GM12878 (cell line): ENCODE measurements at regions of chrX and their contacts with region 1.

Region 1: GRCh38 chrX:52574416-52575275 is 57.8 kb upstream of the XAGE1B start:
- DNase-seq: peak; percentile 2
- ATAC-seq: peak; percentile 86
- H3K4me3 ChIP-seq: no peak overlapping the region
- H3K27ac ChIP-seq: no peak overlapping the region
- H3K4me1 ChIP-seq: no peaks in the 10 kb centered on the region
- H3K27me3 ChIP-seq: no peaks in the 10 kb centered on the region
- CTCF ChIP-seq: peak; percentile 64 to 72 (median 70)
- EP300 ChIP-seq: no peak
- POLR2A ChIP-seq: no peak
- RAD21 ChIP-seq: peak; percentile 73

Region 2: DNA sequence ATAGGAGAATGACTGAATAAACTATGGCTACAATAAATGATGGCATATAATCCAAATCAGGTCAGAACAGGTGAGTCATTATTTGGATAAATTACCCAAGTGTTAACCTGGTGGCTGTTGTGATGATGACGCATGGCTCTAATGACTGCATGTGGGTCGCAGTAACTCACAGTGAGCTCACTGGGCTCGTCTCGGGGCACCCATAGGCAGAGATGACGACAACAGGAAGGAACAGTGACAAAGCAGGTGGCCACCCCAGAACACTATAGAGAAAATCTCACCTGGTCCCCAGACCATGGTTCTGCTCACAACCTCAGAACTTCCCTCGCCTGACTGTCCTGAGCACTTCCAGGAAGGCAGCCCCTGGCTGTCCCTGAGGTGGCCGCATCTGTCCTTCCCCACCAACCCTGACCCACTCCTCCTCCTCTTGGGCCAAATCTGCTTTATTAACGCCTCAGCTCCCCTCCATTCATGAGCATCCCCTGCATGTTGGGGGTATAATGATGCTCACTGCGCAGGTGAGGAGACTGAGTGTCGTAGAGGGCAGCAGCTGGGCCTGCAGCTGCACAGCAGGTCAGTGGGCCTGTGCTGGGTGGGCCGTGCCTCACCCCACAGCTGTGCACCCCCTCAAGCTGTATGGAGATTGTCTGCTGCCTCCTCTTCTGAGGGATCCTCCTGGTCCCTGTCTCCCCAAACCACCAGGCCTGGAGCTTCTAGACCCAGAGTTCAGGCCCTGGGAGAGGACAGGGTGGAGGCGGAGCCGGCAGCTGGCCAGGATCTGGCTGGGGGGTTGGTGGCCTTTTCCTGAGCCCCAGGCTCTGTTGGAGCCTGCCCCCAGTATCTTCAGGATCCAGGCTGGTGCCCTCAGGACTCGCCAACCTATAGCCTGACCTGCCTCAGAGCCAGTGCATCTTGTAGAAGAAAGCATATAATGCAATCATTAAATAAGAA is 414.6 kb after region 1 on chrX:
- CTCF ChIA-PET with region 1: interaction called, 17 read pairs
- POLR2A ChIA-PET with region 1: no interaction called
- RAD21 ChIA-PET with region 1: interaction called, 7 read pairs
- SMC1A ChIA-PET with region 1: interaction called, 8 read pairs
- in situ Hi-C with region 1: loop called (anchors 25 kb)
- intact Hi-C with region 1: no loop called
- DNase-seq: no peak
- ATAC-seq: no peak
- H3K4me3 ChIP-seq: no peak overlapping the region
- H3K27ac ChIP-seq: no peak overlapping the region
- H3K4me1 ChIP-seq: no peaks in the 10 kb centered on the region
- H3K27me3 ChIP-seq: no peaks in the 10 kb centered on the region
- CTCF ChIP-seq: no peak
- EP300 ChIP-seq: no peak
- POLR2A ChIP-seq: no peak
- RAD21 ChIP-seq: no peak

Region 3: DNA sequence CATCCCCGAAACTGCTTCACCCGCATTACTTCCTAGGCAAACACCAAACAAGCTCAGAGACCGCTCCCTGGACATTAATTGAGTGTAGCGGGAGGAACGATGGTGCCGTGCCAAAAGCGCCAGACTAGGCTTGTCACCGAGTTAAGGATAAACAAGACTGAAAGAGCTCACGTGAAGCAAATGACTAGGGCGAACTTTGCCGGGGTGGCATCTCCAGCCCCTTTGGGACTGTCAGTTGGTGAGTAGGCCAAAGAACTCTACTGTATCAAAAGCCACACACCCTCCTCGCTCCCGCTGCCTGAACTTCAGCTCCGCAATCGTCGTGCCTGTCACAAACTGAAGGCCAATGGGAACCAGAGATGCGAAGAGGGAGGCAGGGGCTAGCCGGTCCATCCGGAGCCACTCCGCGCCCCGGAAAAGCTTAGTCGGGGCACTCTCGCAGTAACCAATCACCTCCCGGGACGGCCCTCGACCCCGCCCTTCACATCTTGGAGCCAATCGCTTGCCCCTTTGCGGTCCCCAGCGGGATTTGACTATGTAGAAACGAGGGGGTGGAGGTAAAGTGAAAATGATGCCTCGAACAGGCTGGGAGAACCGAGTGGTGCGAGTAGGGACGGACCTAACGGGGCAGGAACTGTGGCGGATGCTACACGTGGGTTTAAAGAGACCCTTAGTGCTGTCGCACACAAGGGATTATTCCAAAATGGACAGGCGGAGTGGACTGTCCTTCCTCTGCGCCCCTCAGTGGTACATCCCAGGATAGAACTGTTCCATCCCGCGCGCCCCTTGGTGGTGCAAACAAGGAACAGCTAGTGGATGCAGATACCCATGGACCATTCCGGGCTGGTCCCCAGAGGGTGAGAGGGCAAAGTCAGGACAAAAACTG is 420.7 kb after region 1 on chrX:
- CTCF ChIA-PET with region 1: interaction called, 17 read pairs
- POLR2A ChIA-PET with region 1: no interaction called
- RAD21 ChIA-PET with region 1: interaction called, 7 read pairs
- SMC1A ChIA-PET with region 1: interaction called, 8 read pairs
- in situ Hi-C with region 1: loop called (anchors 25 kb)
- intact Hi-C with region 1: no loop called
- DNase-seq: peak; percentile 78
- ATAC-seq: peak; percentile 99
- H3K4me3 ChIP-seq: peak overlapping the region; percentile 71
- H3K27ac ChIP-seq: peak overlapping the region; percentile 94
- H3K4me1 ChIP-seq: no peaks in the 10 kb centered on the region
- H3K27me3 ChIP-seq: no peaks in the 10 kb centered on the region
- CTCF ChIP-seq: peak; percentile 43 to 61 (median 60)
- EP300 ChIP-seq: no peak
- POLR2A ChIP-seq: peak; percentile 48
- RAD21 ChIP-seq: no peak

Region 4: DNA sequence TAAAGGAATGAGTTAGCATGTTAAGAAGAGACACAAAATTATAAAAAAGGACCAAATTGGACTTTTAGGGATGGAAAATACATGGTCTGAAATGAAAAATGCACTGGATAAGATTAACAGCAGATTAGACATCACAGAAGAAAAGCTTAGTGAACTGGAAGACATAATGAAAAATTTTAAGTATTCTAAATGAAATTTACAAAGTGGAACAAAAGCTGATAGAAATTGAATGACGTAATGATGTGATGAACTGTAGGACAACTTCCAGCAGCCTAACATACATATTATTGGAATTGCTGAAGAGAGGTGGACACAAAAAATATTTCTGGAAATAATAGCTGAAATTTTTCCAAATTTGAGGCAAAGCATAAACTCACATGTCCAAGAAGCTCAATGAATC is 434.4 kb after region 1 on chrX:
- CTCF ChIA-PET with region 1: no interaction called
- POLR2A ChIA-PET with region 1: no interaction called
- RAD21 ChIA-PET with region 1: no interaction called
- SMC1A ChIA-PET with region 1: no interaction called
- in situ Hi-C with region 1: no loop called
- intact Hi-C with region 1: no loop called
- DNase-seq: no peak
- ATAC-seq: no peak
- H3K4me3 ChIP-seq: no peak overlapping the region
- H3K27ac ChIP-seq: no peak overlapping the region
- H3K4me1 ChIP-seq: no peaks in the 10 kb centered on the region
- H3K27me3 ChIP-seq: no peaks in the 10 kb centered on the region
- CTCF ChIP-seq: no peak
- EP300 ChIP-seq: no peak
- POLR2A ChIP-seq: no peak
- RAD21 ChIP-seq: no peak